Heart right ventricle (tissue), 16 donors: ENCODE measurements at regions of chr4 and their contacts with region 1.

Region 1: GRCh38 chr4:121112530-121112929 is 40.2 kb upstream of the NDNF start:
- DNase-seq: no peak
- ATAC-seq: no peak
- H3K4me3 ChIP-seq: no peak overlapping the region
- H3K27ac ChIP-seq: no peak overlapping the region
- H3K4me1 ChIP-seq: no peaks in the 10 kb centered on the region
- H3K27me3 ChIP-seq: peaks cover 0 to 11% (median 0%) of the 10 kb centered on the region in 7 donors
- CTCF ChIP-seq: peak; percentile 15 to 64 (median 54)

Region 2: GRCh38 chr4:120071192-120071795 is 1041.2 kb before region 1 on chr4:
- intact Hi-C with region 1: loop called in 2 of 10 experiments (anchors 5 to 10 kb)
- DNase-seq: no peak
- ATAC-seq: no peak
- H3K4me3 ChIP-seq: no peak overlapping the region
- H3K27ac ChIP-seq: no peak overlapping the region
- H3K4me1 ChIP-seq: peaks cover 0 to 37% (median 27%) of the 10 kb centered on the region in 9 donors
- H3K27me3 ChIP-seq: no peaks in the 10 kb centered on the region
- CTCF ChIP-seq: peak; percentile 54 to 80 (median 60)

Region 3: DNA sequence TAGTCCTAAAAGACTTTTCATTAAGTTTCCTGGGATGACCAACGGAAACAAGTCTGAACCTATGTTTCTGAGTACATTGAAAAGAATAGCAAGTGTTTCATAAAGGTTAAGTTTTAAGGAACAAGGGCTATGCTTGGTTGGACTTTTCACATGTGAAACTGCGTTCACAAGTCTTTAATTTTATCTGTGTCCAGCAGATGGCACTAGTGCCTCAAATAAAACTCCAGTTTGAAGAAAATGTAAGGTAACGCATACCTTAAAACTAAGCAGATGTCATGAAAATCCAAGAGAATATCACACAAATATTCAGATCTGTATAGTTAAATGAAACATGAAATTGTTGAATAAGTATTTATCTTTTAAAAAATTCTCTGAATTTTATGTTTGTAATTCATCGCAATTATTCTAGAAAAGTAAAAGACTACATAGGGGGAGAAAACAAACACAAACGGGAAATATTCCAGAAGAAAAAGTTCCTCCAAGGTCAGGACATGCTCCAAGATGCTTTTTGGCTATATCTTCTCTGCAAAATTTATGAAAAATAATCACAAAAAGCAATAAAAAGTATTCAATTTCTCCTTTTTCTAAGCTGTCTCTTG is 956.3 kb before region 1 on chr4:
- intact Hi-C with region 1: loop called in 1 of 10 experiments (anchors 10 kb)
- DNase-seq: peak in 1 of 2 donors; percentile 19
- ATAC-seq: peak in 1 of 8 donors; percentile 52
- H3K4me3 ChIP-seq: no peak overlapping the region
- H3K27ac ChIP-seq: no peak overlapping the region
- H3K4me1 ChIP-seq: no peaks in the 10 kb centered on the region
- H3K27me3 ChIP-seq: no peaks in the 10 kb centered on the region
- CTCF ChIP-seq: peak; percentile 44 to 80 (median 69)

Region 4: GRCh38 chr4:121614101-121614500 is 501.6 kb after region 1 on chr4:
- intact Hi-C with region 1: no loop called
- DNase-seq: no peak
- ATAC-seq: no peak
- H3K4me3 ChIP-seq: no peak overlapping the region
- H3K27ac ChIP-seq: no peak overlapping the region
- H3K4me1 ChIP-seq: no peaks in the 10 kb centered on the region
- H3K27me3 ChIP-seq: no peaks in the 10 kb centered on the region
- CTCF ChIP-seq: no peak